Endothelial cell of umbilical vein (primary cell): ENCODE measurements at regions of chr10 and their contacts with region 1.

Region 1: GRCh38 chr10:104337974-104338735 is at the start of gene ITPRIP:
- DNase-seq: peak; percentile 93
- H3K4me3 ChIP-seq: peak within 1 kb of the TSS; percentile 64 to 99 (median 94)
- H3K27ac ChIP-seq: peak within 1 kb of the TSS; percentile 100
- H3K4me1 ChIP-seq: peaks cover 53% of the 10 kb centered on the region
- H3K27me3 ChIP-seq: no peaks in the 10 kb centered on the region
- CTCF ChIP-seq: peak; percentile 14 to 32
- POLR2A ChIP-seq: peak; percentile 77
- total RNA-seq, gene ITPRIP: 31.4 and 33.3 TPM in 2 replicates

Region 2: GRCh38 chr10:103901299-103901698 is 436.9 kb before region 1 on chr10:
- CTCF ChIA-PET with region 1: no interaction called
- POLR2A ChIA-PET with region 1: no interaction called
- dilution Hi-C with region 1: no loop called
- intact Hi-C with region 1: loop called (anchors 10 kb)
- DNase-seq: peak; percentile 31
- H3K4me3 ChIP-seq: no peak overlapping the region
- H3K27ac ChIP-seq: no peak overlapping the region
- H3K4me1 ChIP-seq: peaks cover 7% of the 10 kb centered on the region
- H3K27me3 ChIP-seq: no peaks in the 10 kb centered on the region
- CTCF ChIP-seq: no peak
- POLR2A ChIP-seq: no peak

Region 3: GRCh38 chr10:104300736-104301292 is 37.3 kb before region 1 on chr10:
- CTCF ChIA-PET with region 1: interaction called, 36 read pairs
- POLR2A ChIA-PET with region 1: interaction called, 7 read pairs
- dilution Hi-C with region 1: no loop called
- intact Hi-C with region 1: loop called (anchors 1 kb)
- DNase-seq: peak; percentile 85
- H3K4me3 ChIP-seq: no peak overlapping the region
- H3K27ac ChIP-seq: peak overlapping the region; percentile 89
- H3K4me1 ChIP-seq: peaks cover 31% of the 10 kb centered on the region
- H3K27me3 ChIP-seq: no peaks in the 10 kb centered on the region
- CTCF ChIP-seq: no peak
- POLR2A ChIP-seq: no peak

Region 4: GRCh38 chr10:104353325-104354048 is 15.3 kb after region 1 on chr10 and contains the start of gene CFAP58:
- CTCF ChIA-PET with region 1: interaction called, 17 read pairs
- POLR2A ChIA-PET with region 1: interaction called, 7 read pairs
- dilution Hi-C with region 1: no loop called
- intact Hi-C with region 1: loop called (anchors 1 kb)
- DNase-seq: peak; percentile 88
- H3K4me3 ChIP-seq: peak within 1 kb of the TSS; percentile 38 to 66 (median 42)
- H3K27ac ChIP-seq: no peak within 1 kb of the TSS
- H3K4me1 ChIP-seq: peaks cover 13% of the 10 kb centered on the region
- H3K27me3 ChIP-seq: peaks cover 0 to 5% of the 10 kb centered on the region in 2 experiments
- CTCF ChIP-seq: peak; percentile 66 to 75
- POLR2A ChIP-seq: no peak
- total RNA-seq, gene CFAP58: 0.29 and 0.35 TPM in 2 replicates